ENCODE measurements at regions of chr12 and their contacts with region 1.

Region 1: DNA sequence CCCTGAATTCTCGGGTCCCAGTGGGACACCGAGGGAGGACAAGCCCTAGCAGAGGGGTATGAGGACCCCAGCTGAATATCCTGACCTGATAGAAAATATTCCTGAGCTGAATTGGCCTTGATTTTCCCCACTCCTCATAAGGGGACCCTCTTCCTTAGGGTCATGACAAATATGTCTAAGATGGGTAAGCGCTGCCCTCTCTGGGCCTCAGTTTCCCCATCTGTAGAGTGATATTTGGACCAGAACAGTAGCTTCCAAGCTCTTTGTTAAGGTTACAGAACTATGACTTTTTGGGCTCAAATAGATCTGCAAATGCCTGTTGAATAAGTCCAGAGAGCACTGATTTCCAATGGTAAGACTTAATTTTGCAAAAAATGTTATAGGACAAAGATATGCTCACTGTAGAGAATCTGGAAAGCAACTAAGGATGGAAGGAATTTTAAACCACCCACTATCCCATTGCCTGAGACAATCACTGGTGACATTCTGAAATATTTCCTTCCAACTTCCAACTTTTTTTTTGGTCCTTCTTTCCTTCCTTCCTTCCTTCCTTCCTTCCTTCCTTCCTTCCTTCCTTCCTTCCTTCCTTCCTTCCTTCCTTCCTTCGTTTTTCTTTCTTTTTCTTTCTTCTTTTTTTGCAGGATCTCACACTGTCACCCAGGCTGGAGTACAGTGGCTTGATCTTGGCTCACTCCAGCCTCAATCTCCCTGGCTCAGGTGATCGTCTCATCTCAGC is 32.0 kb downstream of the MYL2 start:
- DNase-seq: no peak
- H3K4me3 ChIP-seq: peak overlapping the region; percentile 51 to 63 (median 56)
- H3K27ac ChIP-seq: peak overlapping the region in 3 of 4 donors; percentile 67 to 75 (median 70)
- H3K4me1 ChIP-seq: peaks cover 3 to 12% (median 6%) of the 10 kb centered on the region in 4 donors
- H3K27me3 ChIP-seq: peaks cover 0 to 6% (median 0%) of the 10 kb centered on the region in 4 donors
- CTCF ChIP-seq: no peak
- EP300 ChIP-seq: no peak
- POLR2A ChIP-seq: no peak

Region 2: DNA sequence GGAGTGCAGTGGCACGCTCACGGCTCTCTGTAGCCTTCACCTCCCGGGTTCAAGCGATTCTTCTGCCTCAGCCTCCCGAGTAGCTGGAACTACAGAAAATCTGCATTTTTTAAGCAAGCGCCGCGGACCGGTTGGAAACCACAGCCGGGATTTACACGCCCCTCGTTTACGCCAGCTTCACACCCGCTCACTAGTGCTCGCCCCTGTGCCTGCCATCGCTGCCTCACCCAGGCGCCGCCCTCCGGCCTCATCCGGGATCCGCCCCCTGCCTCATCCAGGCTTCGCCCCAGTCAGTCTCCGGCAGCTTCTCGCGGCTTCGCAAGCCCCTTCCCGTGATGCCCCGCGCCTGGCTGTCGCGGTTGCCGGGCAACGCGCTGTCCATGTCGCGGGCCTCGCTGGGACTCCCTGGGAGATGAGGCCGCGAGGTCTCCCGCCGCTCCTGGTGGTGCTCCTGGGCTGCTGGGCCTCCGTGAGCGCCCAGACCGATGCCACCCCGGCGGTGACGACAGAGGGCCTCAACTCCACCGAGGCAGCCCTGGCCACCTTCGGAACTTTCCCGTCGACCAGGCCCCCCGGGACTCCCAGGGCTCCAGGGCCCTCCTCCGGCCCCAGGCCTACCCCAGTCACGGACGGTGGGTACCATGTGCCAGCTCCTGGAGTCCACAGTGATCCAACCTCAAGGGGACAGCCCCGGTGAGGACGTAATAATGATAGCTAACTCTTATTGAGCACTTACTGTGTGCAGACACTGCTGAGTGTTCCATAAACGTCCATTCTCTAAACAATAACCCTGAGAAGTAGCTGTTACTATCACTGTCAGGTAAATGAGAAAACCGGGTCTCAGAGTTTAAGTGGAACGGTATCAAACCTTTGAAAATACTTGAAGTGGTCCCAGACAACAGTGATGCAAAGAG is 274.4 kb before region 1 on chr12 and contains the start of gene TCTN1:
- intact Hi-C with region 1: loop called (anchors 10 kb)
- DNase-seq: peak; percentile 98
- H3K4me3 ChIP-seq: peak within 1 kb of the TSS; percentile 72 to 84 (median 78)
- H3K27ac ChIP-seq: peak within 1 kb of the TSS; percentile 76 to 78 (median 76)
- H3K4me1 ChIP-seq: peaks cover 10 to 24% (median 19%) of the 10 kb centered on the region in 4 donors
- H3K27me3 ChIP-seq: no peaks in the 10 kb centered on the region
- CTCF ChIP-seq: peak in 2 of 3 experiments; percentile 22
- EP300 ChIP-seq: no peak
- POLR2A ChIP-seq: no peak
- total RNA-seq, gene TCTN1: 17.4 to 26.2 (median 21.4) TPM

Region 3: GRCh38 chr12:110704748-110705147 is 183.7 kb before region 1 on chr12:
- intact Hi-C with region 1: loop called (anchors 10 kb)
- DNase-seq: no peak
- H3K4me3 ChIP-seq: no peak overlapping the region
- H3K27ac ChIP-seq: no peak overlapping the region
- H3K4me1 ChIP-seq: no peaks in the 10 kb centered on the region
- H3K27me3 ChIP-seq: no peaks in the 10 kb centered on the region
- CTCF ChIP-seq: peak in 2 of 3 experiments; percentile 11 to 19
- EP300 ChIP-seq: no peak
- POLR2A ChIP-seq: no peak

Region 4: DNA sequence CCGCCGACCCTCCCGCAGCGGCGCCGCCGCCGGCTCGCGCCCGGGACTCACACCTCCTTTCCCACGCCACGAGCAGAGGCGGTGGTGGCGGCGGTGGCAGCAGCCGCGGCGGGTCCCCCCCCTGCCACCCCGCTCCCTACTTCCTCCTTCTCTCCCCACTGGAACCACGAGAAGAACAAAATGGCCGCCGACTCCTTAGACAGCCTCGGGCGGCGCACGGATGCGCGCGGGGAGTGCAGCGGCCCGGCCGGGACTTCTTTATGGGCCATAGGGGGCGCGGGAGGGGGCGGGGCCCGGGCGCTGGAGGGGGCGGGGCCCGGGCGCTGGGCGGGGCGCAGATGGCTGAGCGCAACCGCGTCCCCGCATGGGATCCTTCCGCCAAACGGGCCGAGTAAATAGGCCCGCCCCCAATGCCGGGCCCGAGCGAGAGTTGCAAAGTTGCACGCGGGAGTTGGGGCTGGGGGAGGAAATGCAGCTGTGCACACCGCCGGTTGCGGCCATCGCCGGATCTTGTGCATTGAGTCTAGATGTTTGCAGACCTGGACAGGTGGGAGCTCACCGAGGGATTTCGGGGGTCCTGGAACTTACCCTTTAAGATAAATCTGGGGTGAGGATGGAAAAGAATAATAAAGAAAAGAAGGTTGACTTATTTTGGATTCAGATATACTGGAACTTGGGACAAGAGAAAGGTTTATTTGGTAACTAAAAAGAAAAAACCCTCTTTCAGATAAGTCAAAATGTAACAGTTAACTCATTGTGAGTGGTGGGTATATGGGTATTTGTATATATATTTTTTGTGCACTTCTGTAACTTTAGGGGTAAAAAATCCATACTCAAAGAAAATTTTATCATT is 145.5 kb before region 1 on chr12 and contains the start of gene PPP1CC:
- intact Hi-C with region 1: loop called (anchors 5 kb)
- DNase-seq: peak; percentile 99
- H3K4me3 ChIP-seq: peak within 1 kb of the TSS; percentile 78 to 100 (median 95)
- H3K27ac ChIP-seq: peak within 1 kb of the TSS; percentile 89 to 96 (median 94)
- H3K4me1 ChIP-seq: peaks cover 53 to 62% (median 59%) of the 10 kb centered on the region in 4 donors
- H3K27me3 ChIP-seq: no peaks in the 10 kb centered on the region
- CTCF ChIP-seq: peak in 1 of 3 experiments; percentile 7
- EP300 ChIP-seq: no peak
- POLR2A ChIP-seq: peak; percentile 40
- total RNA-seq, gene PPP1CC: 92.2 to 120 (median 101) TPM

Region 5: DNA sequence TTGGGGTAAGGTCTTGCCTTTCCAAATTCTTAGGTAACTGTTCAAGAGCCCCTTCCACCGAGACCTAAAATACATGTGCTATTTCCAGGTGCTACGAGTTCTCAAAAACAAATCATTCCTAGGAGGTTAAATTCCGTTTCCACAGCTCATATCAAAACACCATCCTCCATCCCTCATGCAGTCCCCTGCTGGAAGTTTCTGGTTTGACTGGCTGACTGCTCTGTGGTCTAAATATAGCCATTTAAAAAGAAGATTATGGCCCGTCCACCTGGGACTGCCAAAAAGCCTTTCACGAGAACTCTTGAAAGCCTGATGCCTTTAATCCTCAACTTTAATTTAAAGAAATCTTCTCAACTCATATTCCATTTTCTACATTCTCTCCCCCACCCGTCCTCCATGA is 233.4 kb after region 1 on chr12:
- intact Hi-C with region 1: no loop called
- DNase-seq: no peak
- H3K4me3 ChIP-seq: no peak overlapping the region
- H3K27ac ChIP-seq: no peak overlapping the region
- H3K4me1 ChIP-seq: peaks cover 0 to 15% (median 10%) of the 10 kb centered on the region in 4 donors
- H3K27me3 ChIP-seq: no peaks in the 10 kb centered on the region
- CTCF ChIP-seq: peak in 1 of 3 experiments; percentile 36
- EP300 ChIP-seq: no peak
- POLR2A ChIP-seq: no peak

Region 6: DNA sequence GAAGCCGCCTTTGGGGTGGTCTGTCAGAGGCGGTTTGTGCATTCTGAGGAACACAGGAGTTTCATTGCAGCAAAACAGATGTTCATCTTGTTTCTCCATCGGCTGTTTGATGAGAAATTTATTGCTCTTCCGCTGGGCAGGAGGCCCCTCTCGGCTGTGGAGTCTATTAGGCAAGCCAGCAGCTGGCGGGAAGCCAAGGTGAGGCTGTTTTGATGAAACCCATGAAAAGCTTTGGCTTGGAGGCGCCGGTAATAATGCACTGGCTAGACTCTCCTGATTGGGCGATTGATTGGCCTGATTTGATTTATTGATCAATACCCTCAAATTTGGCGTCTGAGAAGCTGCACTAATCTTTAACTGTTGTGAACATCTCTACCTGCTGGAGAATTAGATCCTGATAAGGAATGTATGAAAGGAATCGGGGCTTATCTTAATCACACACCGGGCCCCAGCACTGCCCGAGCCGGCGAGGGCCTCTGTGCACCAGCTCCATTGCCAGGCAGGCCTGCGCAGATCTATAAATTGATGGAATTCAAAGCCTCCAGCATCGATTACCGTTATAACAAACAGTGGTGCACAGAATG is 292.8 kb after region 1 on chr12:
- intact Hi-C with region 1: no loop called
- DNase-seq: no peak
- H3K4me3 ChIP-seq: no peak overlapping the region
- H3K27ac ChIP-seq: no peak overlapping the region
- H3K4me1 ChIP-seq: peaks cover 0 to 24% (median 20%) of the 10 kb centered on the region in 4 donors
- H3K27me3 ChIP-seq: peaks cover 0 to 69% (median 2%) of the 10 kb centered on the region in 4 donors
- CTCF ChIP-seq: no peak
- EP300 ChIP-seq: no peak
- POLR2A ChIP-seq: no peak